ENCODE measurements at regions of chr14 and their contacts with region 1.

Region 1: DNA sequence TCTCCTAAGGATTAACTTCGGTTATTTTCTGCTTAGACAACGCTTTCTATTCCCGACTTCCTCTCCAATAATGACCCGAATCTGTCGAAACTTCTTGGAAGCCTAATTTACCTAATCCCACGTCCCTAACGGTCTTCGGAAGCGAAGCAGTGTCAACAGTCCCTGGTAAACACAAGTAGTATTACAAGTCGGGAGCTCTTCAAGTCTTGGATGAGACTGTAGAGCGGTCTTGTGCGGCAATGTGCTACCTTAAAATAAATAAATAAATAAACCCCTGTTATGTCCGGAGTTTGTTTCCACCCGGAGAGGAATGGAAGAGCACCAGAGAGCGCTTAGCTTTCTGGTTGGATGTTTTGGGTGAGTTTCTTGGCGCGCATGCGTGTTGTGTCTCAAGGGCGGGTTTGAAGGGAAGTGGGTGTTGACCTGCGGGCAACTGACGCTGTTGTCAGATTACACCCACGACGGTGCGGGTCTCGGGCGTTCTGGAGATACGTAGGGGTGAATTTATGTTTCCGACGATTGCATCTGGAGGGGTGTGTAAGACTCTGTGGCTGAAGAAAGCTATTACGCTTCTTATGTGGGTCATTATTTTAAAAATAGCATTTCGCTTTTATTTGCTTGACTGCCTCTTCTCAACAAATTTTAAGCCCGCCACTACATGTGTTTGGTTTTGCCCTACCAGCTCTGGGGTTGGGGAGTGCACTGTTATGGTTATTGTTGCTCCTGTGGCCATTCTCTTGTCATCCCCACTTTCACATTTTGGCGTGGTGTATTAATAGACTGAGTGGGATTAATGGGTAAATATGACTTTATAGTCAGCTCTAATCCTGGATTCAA is at the starts of genes KIAA0586 and TIMM9:
- DNase-seq: peak; percentile 98
- ATAC-seq: peak; percentile 91
- H3K4me3 ChIP-seq: peak within 1 kb of the TSS; percentile 74 to 99 (median 96)
- H3K4me3 Mint-ChIP-seq: peak within 1 kb of the TSS; percentile 89
- H3K27ac ChIP-seq: peak within 1 kb of the TSS; percentile 96 to 98
- H3K27ac Mint-ChIP-seq: peak within 1 kb of the TSS; percentile 95
- H3K4me1 ChIP-seq: peaks cover 15 to 19% of the 10 kb centered on the region in 2 donors
- H3K4me1 Mint-ChIP-seq: peaks cover 39% of the 10 kb centered on the region
- H3K27me3 ChIP-seq: no peaks in the 10 kb centered on the region
- H3K27me3 Mint-ChIP-seq: no peaks in the 10 kb centered on the region
- CTCF ChIP-seq: no peak
- total RNA-seq, gene KIAA0586: 27.5 and 40.6 TPM in 2 replicates
- total RNA-seq, gene TIMM9: 23.8 and 27.7 TPM in 2 replicates

Region 2: DNA sequence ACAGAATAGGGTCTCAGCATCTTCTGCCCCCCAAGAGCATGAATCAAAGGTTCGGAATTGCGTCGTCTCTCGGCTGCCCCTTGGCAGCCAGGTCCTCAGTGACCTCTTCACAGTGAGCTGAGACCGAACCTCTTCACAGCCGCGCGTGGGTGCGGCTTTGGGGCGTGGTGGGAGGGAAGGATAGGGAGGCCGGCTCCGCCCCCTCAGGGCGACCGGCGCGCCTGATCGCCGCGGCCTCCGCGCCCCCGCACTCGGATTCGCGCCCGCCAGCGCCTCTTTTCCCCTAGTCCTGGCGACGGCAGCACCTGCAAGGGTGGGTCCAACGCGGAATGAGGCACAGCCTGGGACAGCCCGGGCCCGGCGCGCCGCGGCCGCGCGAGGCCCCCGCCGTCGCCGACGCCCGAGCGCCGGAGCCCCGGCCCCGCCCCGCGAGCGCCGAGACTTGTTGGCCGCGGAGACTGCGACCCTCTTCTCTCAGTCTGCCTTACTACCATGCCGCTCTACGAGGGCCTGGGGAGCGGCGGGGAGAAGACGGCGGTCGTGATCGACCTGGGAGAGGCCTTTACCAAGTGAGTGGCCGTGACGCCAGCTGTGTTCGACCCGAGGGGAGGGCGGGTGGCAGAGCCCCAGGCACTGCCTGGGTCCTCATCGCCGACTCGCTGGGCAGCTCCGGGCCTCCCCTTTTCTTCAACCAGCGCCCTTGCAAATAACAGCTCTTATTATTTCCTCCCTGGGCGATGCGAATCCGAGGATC is 227.6 kb before region 1 on chr14 and contains the start of gene ACTR10:
- CTCF ChIA-PET with region 1: interaction called, 3 read pairs
- POLR2A ChIA-PET with region 1: no interaction called
- intact Hi-C with region 1: loop called (anchors 1 kb)
- DNase-seq: peak; percentile 95
- ATAC-seq: peak; percentile 89
- H3K4me3 ChIP-seq: peak within 1 kb of the TSS; percentile 71 to 88 (median 79)
- H3K4me3 Mint-ChIP-seq: peak within 1 kb of the TSS; percentile 95
- H3K27ac ChIP-seq: peak within 1 kb of the TSS; percentile 70 to 96
- H3K27ac Mint-ChIP-seq: peak within 1 kb of the TSS; percentile 96
- H3K4me1 ChIP-seq: peaks cover 15 to 17% of the 10 kb centered on the region in 2 donors
- H3K4me1 Mint-ChIP-seq: peaks cover 28% of the 10 kb centered on the region
- H3K27me3 ChIP-seq: peaks cover 0 to 3% (median 1%) of the 10 kb centered on the region in 4 experiments
- H3K27me3 Mint-ChIP-seq: no peaks in the 10 kb centered on the region
- CTCF ChIP-seq: no peak
- total RNA-seq, gene ACTR10: 34.1 and 40.6 TPM in 2 replicates

Region 3: DNA sequence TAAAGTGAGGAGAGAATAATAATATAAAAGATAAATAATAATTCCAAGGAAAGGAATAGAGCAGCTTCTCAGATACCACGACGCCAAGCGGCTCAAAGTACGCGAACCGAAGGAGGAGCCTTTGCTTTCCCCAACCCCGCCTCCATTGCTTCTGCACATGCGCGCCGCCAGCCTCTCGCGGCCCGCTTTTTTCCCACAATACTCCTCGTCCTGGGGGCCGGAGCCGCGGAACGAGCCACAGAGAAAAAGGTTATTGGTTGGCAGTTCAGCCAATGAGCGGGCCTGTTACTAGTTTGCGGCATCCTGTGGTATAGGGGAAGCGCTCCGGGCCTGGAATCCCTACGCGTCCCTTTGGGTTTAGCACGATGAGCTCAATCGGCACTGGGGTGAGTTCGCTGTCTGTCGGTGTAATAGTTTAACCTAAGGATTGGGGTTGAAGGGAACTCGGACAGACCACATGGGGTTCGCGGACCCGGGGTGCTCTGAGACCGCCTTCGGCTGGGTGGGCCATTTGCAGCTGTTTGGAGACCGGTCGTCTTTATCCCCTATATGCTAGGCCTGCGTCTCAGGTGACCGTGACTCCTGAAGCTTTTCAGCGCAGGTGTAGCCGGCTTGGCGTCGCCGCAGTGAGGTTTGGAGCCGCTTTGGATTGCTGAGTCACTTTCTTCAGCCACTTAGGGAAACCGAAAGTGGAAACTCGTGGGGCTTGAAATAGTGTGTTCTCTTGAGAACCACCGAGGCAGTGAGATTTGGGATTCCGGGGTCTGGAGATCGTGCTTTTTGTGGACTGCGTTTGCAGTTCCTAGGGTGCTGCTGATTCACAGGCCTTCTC is 182.7 kb before region 1 on chr14 and contains the start of gene PSMA3:
- CTCF ChIA-PET with region 1: no interaction called
- POLR2A ChIA-PET with region 1: interaction called, 3 read pairs
- intact Hi-C with region 1: loop called (anchors 1 kb)
- DNase-seq: peak; percentile 97
- ATAC-seq: peak; percentile 87
- H3K4me3 ChIP-seq: peak within 1 kb of the TSS; percentile 89 to 100 (median 97)
- H3K4me3 Mint-ChIP-seq: peak within 1 kb of the TSS; percentile 96
- H3K27ac ChIP-seq: peak within 1 kb of the TSS; percentile 90 to 92
- H3K27ac Mint-ChIP-seq: peak within 1 kb of the TSS; percentile 96
- H3K4me1 ChIP-seq: peaks cover 9 to 19% of the 10 kb centered on the region in 2 donors
- H3K4me1 Mint-ChIP-seq: peaks cover 44% of the 10 kb centered on the region
- H3K27me3 ChIP-seq: no peaks in the 10 kb centered on the region
- H3K27me3 Mint-ChIP-seq: no peaks in the 10 kb centered on the region
- CTCF ChIP-seq: no peak
- total RNA-seq, gene PSMA3: 98.1 and 99.2 TPM in 2 replicates

Region 4: DNA sequence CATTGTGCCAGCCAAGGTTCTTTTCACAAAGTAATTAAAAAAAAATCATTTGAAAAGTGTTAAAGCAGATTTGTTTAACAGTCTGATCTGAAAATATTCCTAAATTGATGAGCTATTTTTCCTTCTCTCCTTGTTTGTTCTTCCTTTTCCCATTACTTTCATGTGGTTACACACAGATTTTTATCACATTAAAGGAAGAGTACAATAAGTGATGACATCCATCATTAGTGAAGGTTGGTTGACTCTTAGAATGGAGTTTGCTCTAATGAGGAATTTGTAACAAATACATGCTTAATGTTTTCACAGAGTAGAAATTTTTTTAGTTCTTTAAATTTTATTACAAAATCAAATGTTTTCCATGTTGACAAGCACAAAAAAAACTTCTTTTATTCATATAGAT is 50.7 kb before region 1 on chr14:
- CTCF ChIA-PET with region 1: no interaction called
- POLR2A ChIA-PET with region 1: no interaction called
- intact Hi-C with region 1: no loop called
- DNase-seq: no peak
- ATAC-seq: no peak
- H3K4me3 ChIP-seq: no peak overlapping the region
- H3K4me3 Mint-ChIP-seq: no peak overlapping the region
- H3K27ac ChIP-seq: no peak overlapping the region
- H3K27ac Mint-ChIP-seq: no peak overlapping the region
- H3K4me1 ChIP-seq: no peaks in the 10 kb centered on the region
- H3K4me1 Mint-ChIP-seq: no peaks in the 10 kb centered on the region
- H3K27me3 ChIP-seq: no peaks in the 10 kb centered on the region
- H3K27me3 Mint-ChIP-seq: no peaks in the 10 kb centered on the region
- CTCF ChIP-seq: no peak

Region 5: DNA sequence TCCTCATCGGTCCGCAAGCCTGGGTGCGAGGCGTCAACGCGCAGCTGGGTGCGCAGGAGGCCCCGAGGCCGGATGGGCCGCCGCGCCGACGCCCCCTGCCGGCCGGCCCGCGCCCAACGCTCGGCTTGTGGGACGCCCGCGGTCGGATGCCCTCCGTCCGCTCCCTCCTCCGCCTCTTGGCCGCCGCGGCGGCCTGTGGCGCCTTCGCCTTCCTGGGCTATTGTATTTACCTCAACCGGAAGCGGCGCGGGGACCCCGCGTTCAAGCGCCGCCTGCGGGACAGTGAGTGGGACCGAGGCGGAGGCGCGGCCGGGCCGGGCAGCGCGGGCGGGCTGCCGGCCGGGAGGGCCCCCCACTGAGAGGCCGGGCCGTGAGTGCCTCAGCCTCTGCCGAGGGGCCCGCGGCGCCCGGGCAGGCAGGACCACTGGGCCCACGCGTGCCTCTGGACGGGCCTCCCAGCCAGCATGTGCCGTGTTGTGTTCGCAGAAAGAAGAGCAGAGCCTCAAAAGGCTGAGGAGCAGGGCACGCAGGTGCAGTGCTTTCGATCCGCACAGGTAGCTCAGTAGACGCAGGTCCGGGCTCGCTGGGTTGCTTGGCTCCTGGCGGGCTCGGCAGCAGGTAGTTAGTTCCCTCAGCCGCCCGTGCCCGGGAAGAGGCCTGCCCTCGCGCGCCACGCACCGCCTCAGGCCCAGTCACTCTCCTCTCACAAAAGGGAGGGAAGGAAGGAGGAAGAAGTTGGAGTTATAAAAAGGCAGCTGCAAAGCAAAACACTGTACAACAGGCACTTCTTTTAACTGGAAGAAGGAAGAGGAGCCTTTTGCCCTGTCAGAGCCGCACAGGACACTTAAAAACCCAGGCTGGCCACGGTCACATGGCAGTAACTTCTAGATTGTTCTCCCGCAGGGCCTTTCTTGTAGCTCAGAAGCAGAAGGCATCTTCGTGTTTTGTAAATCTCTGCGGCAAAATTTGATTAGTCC is 31.4 kb before region 1 on chr14 and contains the start of gene TOMM20L:
- CTCF ChIA-PET with region 1: interaction called, 15 read pairs
- POLR2A ChIA-PET with region 1: interaction called, 4 read pairs
- intact Hi-C with region 1: loop called (anchors 1 kb)
- DNase-seq: peak; percentile 89
- ATAC-seq: peak; percentile 90
- H3K4me3 ChIP-seq: peak within 1 kb of the TSS; percentile 36 to 77 (median 66)
- H3K4me3 Mint-ChIP-seq: peak within 1 kb of the TSS; percentile 87
- H3K27ac ChIP-seq: peak within 1 kb of the TSS; percentile 55 to 76
- H3K27ac Mint-ChIP-seq: peak within 1 kb of the TSS; percentile 87
- H3K4me1 ChIP-seq: peaks cover 9 to 14% of the 10 kb centered on the region in 2 donors
- H3K4me1 Mint-ChIP-seq: peaks cover 13% of the 10 kb centered on the region
- H3K27me3 ChIP-seq: no peaks in the 10 kb centered on the region
- H3K27me3 Mint-ChIP-seq: no peaks in the 10 kb centered on the region
- CTCF ChIP-seq: peak; percentile 93
- total RNA-seq, gene TOMM20L: 0.70 and 1.3 TPM in 2 replicates

Region 6: DNA sequence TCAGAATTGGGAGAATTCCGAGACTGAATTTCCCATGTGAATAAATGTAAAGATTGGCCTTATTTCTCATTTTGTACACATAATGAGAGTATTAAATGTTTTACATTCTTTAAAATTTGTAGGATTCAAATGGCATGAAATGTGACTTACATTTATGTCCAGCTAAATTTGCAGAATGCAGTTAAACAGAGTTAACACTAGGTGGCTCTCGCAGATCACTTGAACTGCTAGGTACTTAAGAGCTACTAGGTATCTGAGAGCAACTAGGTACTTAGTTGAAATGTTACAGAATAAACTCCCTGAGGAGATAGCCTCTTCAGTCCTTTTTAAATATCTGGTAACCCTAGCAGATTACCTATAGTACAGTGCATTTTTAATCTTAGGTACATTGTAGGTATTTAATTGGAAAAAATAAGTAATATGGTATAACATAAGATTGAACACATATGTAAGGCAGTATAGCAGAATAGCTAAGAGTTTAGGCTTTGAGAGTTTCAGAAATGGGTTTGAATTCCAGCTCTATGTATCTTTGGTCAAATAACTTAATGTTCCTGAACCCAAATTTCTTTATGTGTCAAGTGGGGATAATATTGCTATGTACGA is 73.8 kb after region 1 on chr14:
- CTCF ChIA-PET with region 1: no interaction called
- POLR2A ChIA-PET with region 1: no interaction called
- intact Hi-C with region 1: no loop called
- DNase-seq: peak; percentile 64
- ATAC-seq: peak; percentile 63
- H3K4me3 ChIP-seq: no peak overlapping the region
- H3K4me3 Mint-ChIP-seq: no peak overlapping the region
- H3K27ac ChIP-seq: no peak overlapping the region
- H3K27ac Mint-ChIP-seq: no peak overlapping the region
- H3K4me1 ChIP-seq: no peaks in the 10 kb centered on the region
- H3K4me1 Mint-ChIP-seq: no peaks in the 10 kb centered on the region
- H3K27me3 ChIP-seq: no peaks in the 10 kb centered on the region
- H3K27me3 Mint-ChIP-seq: no peaks in the 10 kb centered on the region
- CTCF ChIP-seq: peak; percentile 94

Measured in B cell (primary cell).